CD4-positive, alpha-beta T cell (primary cell): ENCODE measurements at regions of chr2 and their contacts with region 1.

Region 1: GRCh38 chr2:109031476-109032228 is 42.6 kb upstream of the EDAR start:
- DNase-seq: peak; percentile 52 to 93 (median 75)
- ATAC-seq: peak; percentile 78
- H3K4me3 ChIP-seq: peak overlapping the region; percentile 56
- H3K4me3 Mint-ChIP-seq: peak overlapping the region; percentile 82
- H3K27ac ChIP-seq: peak overlapping the region; percentile 82 to 86
- H3K27ac Mint-ChIP-seq: peak overlapping the region; percentile 92
- H3K4me1 ChIP-seq: peaks cover 81% of the 10 kb centered on the region
- H3K4me1 Mint-ChIP-seq: peaks cover 77% of the 10 kb centered on the region
- H3K27me3 ChIP-seq: no peaks in the 10 kb centered on the region
- H3K27me3 Mint-ChIP-seq: no peaks in the 10 kb centered on the region
- CTCF ChIP-seq: no peak

Region 2: GRCh38 chr2:107222466-107222865 is 1809.2 kb before region 1 on chr2:
- CTCF ChIA-PET with region 1: no interaction called
- POLR2A ChIA-PET with region 1: no interaction called
- intact Hi-C with region 1: no loop called
- DNase-seq: no peak
- ATAC-seq: no peak
- H3K4me3 ChIP-seq: no peak overlapping the region
- H3K4me3 Mint-ChIP-seq: no peak overlapping the region
- H3K27ac ChIP-seq: no peak overlapping the region
- H3K27ac Mint-ChIP-seq: no peak overlapping the region
- H3K4me1 ChIP-seq: no peaks in the 10 kb centered on the region
- H3K4me1 Mint-ChIP-seq: no peaks in the 10 kb centered on the region
- H3K27me3 ChIP-seq: no peaks in the 10 kb centered on the region
- H3K27me3 Mint-ChIP-seq: no peaks in the 10 kb centered on the region
- CTCF ChIP-seq: no peak

Region 3: DNA sequence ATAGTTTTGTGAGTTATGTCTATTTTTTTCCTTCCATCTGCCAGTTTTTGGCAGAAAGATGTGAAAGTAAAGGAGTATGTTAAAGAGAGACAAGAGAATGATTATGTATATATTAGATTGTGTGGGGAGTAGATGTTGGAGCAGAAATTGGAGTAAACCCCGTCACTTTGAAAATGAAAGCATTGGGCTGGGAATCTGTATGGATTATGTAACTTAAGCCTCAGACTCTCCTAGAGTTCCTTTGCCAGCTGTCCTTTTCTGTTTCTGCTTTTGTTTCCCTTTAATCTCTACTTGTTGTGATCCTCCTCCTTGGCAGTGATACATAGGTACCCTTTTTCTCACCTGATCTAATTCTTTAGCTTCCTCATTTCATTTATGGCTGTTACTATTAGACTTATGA is 225.9 kb before region 1 on chr2:
- CTCF ChIA-PET with region 1: no interaction called
- POLR2A ChIA-PET with region 1: no interaction called
- intact Hi-C with region 1: no loop called
- DNase-seq: no peak
- ATAC-seq: no peak
- H3K4me3 ChIP-seq: no peak overlapping the region
- H3K4me3 Mint-ChIP-seq: no peak overlapping the region
- H3K27ac ChIP-seq: no peak overlapping the region
- H3K27ac Mint-ChIP-seq: no peak overlapping the region
- H3K4me1 ChIP-seq: no peaks in the 10 kb centered on the region
- H3K4me1 Mint-ChIP-seq: no peaks in the 10 kb centered on the region
- H3K27me3 ChIP-seq: no peaks in the 10 kb centered on the region
- H3K27me3 Mint-ChIP-seq: no peaks in the 10 kb centered on the region
- CTCF ChIP-seq: no peak

Region 4: GRCh38 chr2:108960006-108960405 is 71.6 kb before region 1 on chr2:
- CTCF ChIA-PET with region 1: no interaction called
- POLR2A ChIA-PET with region 1: interaction called, 14 read pairs
- intact Hi-C with region 1: loop called in 1 of 2 experiments (anchors 2 kb)
- DNase-seq: no peak
- ATAC-seq: no peak
- H3K4me3 ChIP-seq: no peak overlapping the region
- H3K4me3 Mint-ChIP-seq: peak overlapping the region; percentile 25
- H3K27ac ChIP-seq: no peak overlapping the region
- H3K27ac Mint-ChIP-seq: peak overlapping the region; percentile 90
- H3K4me1 ChIP-seq: peaks cover 63% of the 10 kb centered on the region
- H3K4me1 Mint-ChIP-seq: peaks cover 85% of the 10 kb centered on the region
- H3K27me3 ChIP-seq: no peaks in the 10 kb centered on the region
- H3K27me3 Mint-ChIP-seq: no peaks in the 10 kb centered on the region
- CTCF ChIP-seq: no peak

Region 5: GRCh38 chr2:109001201-109001600 is 30.5 kb before region 1 on chr2:
- CTCF ChIA-PET with region 1: no interaction called
- POLR2A ChIA-PET with region 1: interaction called, 15 read pairs
- intact Hi-C with region 1: no loop called
- DNase-seq: no peak
- ATAC-seq: no peak
- H3K4me3 ChIP-seq: no peak overlapping the region
- H3K4me3 Mint-ChIP-seq: no peak overlapping the region
- H3K27ac ChIP-seq: no peak overlapping the region
- H3K27ac Mint-ChIP-seq: peak overlapping the region; percentile 36
- H3K4me1 ChIP-seq: peaks cover 10% of the 10 kb centered on the region
- H3K4me1 Mint-ChIP-seq: peaks cover 30% of the 10 kb centered on the region
- H3K27me3 ChIP-seq: no peaks in the 10 kb centered on the region
- H3K27me3 Mint-ChIP-seq: no peaks in the 10 kb centered on the region
- CTCF ChIP-seq: no peak

Region 6: DNA sequence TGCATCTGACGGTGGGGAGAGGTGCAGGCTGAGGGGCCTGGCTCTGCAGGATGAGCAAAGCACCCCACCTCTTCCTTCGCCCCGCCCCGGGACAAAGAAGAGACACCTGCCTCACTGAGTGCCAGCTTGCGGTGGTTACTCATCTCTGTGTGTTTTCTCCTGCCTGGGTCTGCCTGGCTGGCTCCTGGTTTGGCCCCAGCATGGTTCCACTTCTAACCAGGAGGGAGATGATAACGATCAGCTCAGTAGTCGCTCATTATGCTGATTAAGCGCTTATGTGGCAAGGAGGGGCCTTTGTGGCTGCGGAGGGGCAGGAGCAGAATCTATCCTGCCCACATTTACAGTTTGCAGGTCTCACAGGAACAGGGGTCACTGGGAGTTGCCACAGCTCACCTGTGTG is 26.0 kb after region 1 on chr2:
- CTCF ChIA-PET with region 1: no interaction called
- POLR2A ChIA-PET with region 1: interaction called, 24 read pairs
- intact Hi-C with region 1: loop called in 1 of 2 experiments (anchors 2 kb)
- DNase-seq: peak in 7 of 14 experiments; percentile 24 to 61 (median 43)
- ATAC-seq: peak; percentile 97
- H3K4me3 ChIP-seq: no peak overlapping the region
- H3K4me3 Mint-ChIP-seq: peak overlapping the region; percentile 48
- H3K27ac ChIP-seq: no peak overlapping the region
- H3K27ac Mint-ChIP-seq: peak overlapping the region; percentile 70
- H3K4me1 ChIP-seq: peaks cover 29% of the 10 kb centered on the region
- H3K4me1 Mint-ChIP-seq: peaks cover 47% of the 10 kb centered on the region
- H3K27me3 ChIP-seq: no peaks in the 10 kb centered on the region
- H3K27me3 Mint-ChIP-seq: no peaks in the 10 kb centered on the region
- CTCF ChIP-seq: no peak

Region 7: GRCh38 chr2:109128048-109128465 is 96.4 kb after region 1 on chr2:
- CTCF ChIA-PET with region 1: interaction called, 3 read pairs
- POLR2A ChIA-PET with region 1: interaction called, 53 read pairs
- intact Hi-C with region 1: loop called (anchors 5 kb)
- DNase-seq: peak; percentile 44 to 82 (median 58)
- ATAC-seq: peak; percentile 65
- H3K4me3 ChIP-seq: peak overlapping the region; percentile 73
- H3K4me3 Mint-ChIP-seq: peak overlapping the region; percentile 78
- H3K27ac ChIP-seq: no peak overlapping the region
- H3K27ac Mint-ChIP-seq: peak overlapping the region; percentile 57
- H3K4me1 ChIP-seq: peaks cover 29% of the 10 kb centered on the region
- H3K4me1 Mint-ChIP-seq: peaks cover 40% of the 10 kb centered on the region
- H3K27me3 ChIP-seq: peaks cover 4 to 19% of the 10 kb centered on the region in 2 experiments
- H3K27me3 Mint-ChIP-seq: peaks cover 4% of the 10 kb centered on the region
- CTCF ChIP-seq: peak; percentile 83

Region 8: DNA sequence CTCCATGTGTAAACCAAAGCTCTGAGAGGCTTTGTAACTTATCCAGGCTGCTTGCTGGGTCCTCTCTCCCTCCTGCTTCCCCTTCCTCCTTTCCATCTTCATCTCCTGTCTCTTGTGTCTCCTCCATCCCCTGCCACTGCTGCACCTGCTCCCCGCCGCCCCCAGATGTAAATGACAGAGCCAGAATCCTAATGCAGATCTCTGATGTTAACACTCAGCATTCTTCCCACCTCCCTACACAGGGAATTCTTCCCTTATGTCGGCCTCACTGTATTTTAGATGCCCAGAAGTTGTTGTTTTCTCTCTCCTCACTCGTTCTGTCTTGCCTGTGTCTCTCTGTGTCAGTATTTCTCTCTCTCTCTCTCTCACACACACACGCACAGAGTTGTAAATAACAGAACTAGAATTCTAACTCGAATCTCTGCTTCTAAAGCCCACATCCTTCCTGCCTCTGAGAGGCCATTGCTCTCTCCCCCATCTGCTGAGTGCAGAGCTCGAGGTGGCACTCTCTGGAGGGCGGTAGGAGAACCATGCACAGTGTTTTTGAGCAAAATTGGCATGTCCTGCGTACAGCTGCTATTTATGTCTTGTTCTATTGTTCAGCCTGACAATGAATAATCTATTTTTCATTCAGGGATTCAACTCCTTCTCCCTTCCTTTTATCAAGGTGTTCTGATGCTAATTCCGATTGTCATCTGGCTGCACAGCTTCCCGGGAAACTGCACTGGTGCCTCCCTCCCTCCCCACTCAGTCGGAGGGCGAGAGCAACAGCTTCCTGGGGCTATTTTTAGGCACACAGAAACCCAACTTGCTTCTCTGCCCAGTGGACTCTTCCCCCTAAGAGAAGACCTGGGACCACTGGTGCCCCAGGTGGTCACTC is 317.3 kb after region 1 on chr2:
- CTCF ChIA-PET with region 1: no interaction called
- POLR2A ChIA-PET with region 1: interaction called, 22 read pairs
- intact Hi-C with region 1: no loop called
- DNase-seq: peak; percentile 36 to 79 (median 56)
- ATAC-seq: peak; percentile 99
- H3K4me3 ChIP-seq: peak overlapping the region; percentile 19
- H3K4me3 Mint-ChIP-seq: peak overlapping the region; percentile 28
- H3K27ac ChIP-seq: peak overlapping the region; percentile 64 to 69
- H3K27ac Mint-ChIP-seq: peak overlapping the region; percentile 87
- H3K4me1 ChIP-seq: peaks cover 44% of the 10 kb centered on the region
- H3K4me1 Mint-ChIP-seq: peaks cover 50% of the 10 kb centered on the region
- H3K27me3 ChIP-seq: no peaks in the 10 kb centered on the region
- H3K27me3 Mint-ChIP-seq: no peaks in the 10 kb centered on the region
- CTCF ChIP-seq: no peak